ENCODE measurements at regions of chr4 and their contacts with region 1.

Region 1: DNA sequence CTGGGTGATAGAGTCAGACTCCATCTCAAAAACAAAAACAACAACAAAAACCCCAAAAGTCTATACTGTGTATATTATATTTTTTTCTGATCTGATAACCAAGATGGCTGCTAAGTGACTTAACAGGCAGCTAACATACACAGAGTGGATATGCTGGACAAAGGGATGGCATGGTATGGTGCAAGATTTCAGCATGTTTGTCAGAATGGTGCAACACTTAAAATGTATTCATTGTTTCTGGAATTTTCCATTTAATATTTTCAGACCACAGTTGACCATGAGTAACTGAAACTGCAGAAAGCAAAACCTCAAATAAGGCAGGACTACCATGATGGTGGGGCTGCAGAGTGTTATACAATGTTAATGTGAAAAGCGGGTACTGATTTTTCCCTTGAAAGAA is 6.1 kb upstream of the BOD1L1 start:
- DNase-seq: no peak
- ATAC-seq: no peak
- H3K4me3 ChIP-seq: no peak overlapping the region
- H3K27ac ChIP-seq: no peak overlapping the region
- H3K4me1 ChIP-seq: peaks cover 0 to 2% of the 10 kb centered on the region in 2 experiments; a peak in 2 of 4 replicates
- H3K27me3 ChIP-seq: no peaks in the 10 kb centered on the region; the same call in 1 of the 2 replicates
- CTCF ChIP-seq: no peak
- POLR2A ChIP-seq: no peak
- RAD21 ChIP-seq: no peak

Region 2: DNA sequence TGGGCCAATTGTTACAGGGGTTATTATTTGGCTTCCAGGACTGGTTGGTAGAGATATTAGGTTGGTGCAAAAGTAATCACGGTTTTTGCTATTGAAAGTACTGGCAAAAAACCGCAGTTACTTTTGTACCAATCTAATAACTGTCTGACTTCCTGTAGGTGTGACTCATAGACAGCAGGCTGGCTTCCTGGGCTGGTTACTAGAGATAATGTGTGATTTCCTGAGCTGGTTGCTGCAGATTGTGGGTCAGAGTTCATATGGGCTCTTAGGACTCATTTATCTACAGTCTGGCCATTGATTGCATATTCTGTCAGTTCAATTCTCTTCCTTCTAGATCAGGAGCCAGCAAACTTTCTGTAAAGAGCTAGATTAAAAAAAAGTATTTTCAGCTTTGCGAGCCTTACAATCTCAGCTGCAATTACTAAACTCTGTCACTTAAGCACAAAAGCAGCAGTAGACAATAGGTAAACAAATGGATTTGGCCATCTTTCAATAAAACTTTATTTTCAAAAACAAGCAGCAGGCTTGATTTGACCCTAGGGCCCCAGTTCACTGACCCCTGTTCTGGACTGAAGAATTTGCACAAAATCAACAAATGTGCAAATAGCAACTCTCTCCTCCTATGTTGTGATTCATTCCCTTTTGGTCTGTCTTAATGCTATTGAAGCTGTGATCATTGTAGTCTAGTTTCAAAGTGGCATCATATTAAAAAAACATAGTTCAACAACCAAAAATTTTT is 44.7 kb after region 1 on chr4:
- CTCF ChIA-PET with region 1: no interaction called
- POLR2A ChIA-PET with region 1: no interaction called
- RAD21 ChIA-PET with region 1: no interaction called
- intact Hi-C with region 1: loop called (anchors 1 kb)
- DNase-seq: no peak
- ATAC-seq: no peak
- H3K4me3 ChIP-seq: no peak overlapping the region
- H3K27ac ChIP-seq: no peak overlapping the region
- H3K4me1 ChIP-seq: no peaks in the 10 kb centered on the region
- H3K27me3 ChIP-seq: no peaks in the 10 kb centered on the region
- CTCF ChIP-seq: no peak
- POLR2A ChIP-seq: no peak
- RAD21 ChIP-seq: no peak

Measured in HCT116 (cell line).